Panc1 (cell line): ENCODE measurements at regions of chr20 and their contacts with region 1.

Region 1: GRCh38 chr20:8722276-8722928 is 346.5 kb upstream of the PLCB4 start:
- DNase-seq: peak; percentile 51
- ATAC-seq: peak; percentile 87
- H3K4me3 ChIP-seq: no peak overlapping the region
- H3K27ac ChIP-seq: no peak overlapping the region
- H3K4me1 ChIP-seq: no peaks in the 10 kb centered on the region
- H3K27me3 ChIP-seq: no peaks in the 10 kb centered on the region
- CTCF ChIP-seq: peak; percentile 84

Region 2: GRCh38 chr20:7935027-7935551 is 787.3 kb before region 1 on chr20:
- CTCF ChIA-PET with region 1: interaction called, 34 read pairs
- POLR2A ChIA-PET with region 1: no interaction called
- in situ Hi-C with region 1: no loop called
- intact Hi-C with region 1: loop called (anchors 2 kb)
- DNase-seq: no peak
- ATAC-seq: no peak
- H3K4me3 ChIP-seq: no peak overlapping the region
- H3K27ac ChIP-seq: no peak overlapping the region
- H3K4me1 ChIP-seq: no peaks in the 10 kb centered on the region
- H3K27me3 ChIP-seq: no peaks in the 10 kb centered on the region
- CTCF ChIP-seq: no peak

Region 3: GRCh38 chr20:8043687-8044282 is 678.6 kb before region 1 on chr20:
- CTCF ChIA-PET with region 1: interaction called, 16 read pairs
- POLR2A ChIA-PET with region 1: no interaction called
- in situ Hi-C with region 1: no loop called
- intact Hi-C with region 1: loop called (anchors 2 kb)
- DNase-seq: peak; percentile 42
- ATAC-seq: peak; percentile 81; the same call in 1 of the 2 replicates
- H3K4me3 ChIP-seq: no peak overlapping the region
- H3K27ac ChIP-seq: no peak overlapping the region
- H3K4me1 ChIP-seq: no peaks in the 10 kb centered on the region
- H3K27me3 ChIP-seq: no peaks in the 10 kb centered on the region; the same call in 1 of the 2 replicates
- CTCF ChIP-seq: peak; percentile 75; the same call in 1 of the 2 replicates

Region 4: GRCh38 chr20:8131598-8132483 is 590.6 kb before region 1 on chr20 and contains the start of gene PLCB1:
- CTCF ChIA-PET with region 1: no interaction called
- POLR2A ChIA-PET with region 1: no interaction called
- in situ Hi-C with region 1: no loop called
- intact Hi-C with region 1: loop called (anchors 1 kb)
- DNase-seq: peak; percentile 20
- ATAC-seq: peak; percentile 98
- H3K4me3 ChIP-seq: peak within 1 kb of the TSS; percentile 33 to 44; a peak in 3 of 4 replicates
- H3K27ac ChIP-seq: no peak within 1 kb of the TSS
- H3K4me1 ChIP-seq: peaks cover 3% of the 10 kb centered on the region; the same call in 1 of the 2 replicates
- H3K27me3 ChIP-seq: peaks cover 18% of the 10 kb centered on the region
- CTCF ChIP-seq: peak; percentile 91
- total RNA-seq, gene PLCB1: 0.59 TPM

Region 5: GRCh38 chr20:8389381-8390036 is 332.9 kb before region 1 on chr20:
- CTCF ChIA-PET with region 1: no interaction called
- POLR2A ChIA-PET with region 1: no interaction called
- in situ Hi-C with region 1: no loop called
- intact Hi-C with region 1: loop called (anchors 5 kb)
- DNase-seq: peak; percentile 1
- ATAC-seq: no peak
- H3K4me3 ChIP-seq: no peak overlapping the region
- H3K27ac ChIP-seq: no peak overlapping the region
- H3K4me1 ChIP-seq: no peaks in the 10 kb centered on the region
- H3K27me3 ChIP-seq: no peaks in the 10 kb centered on the region
- CTCF ChIP-seq: peak; percentile 58

Region 6: GRCh38 chr20:8983478-8984345 is 261.3 kb after region 1 on chr20:
- CTCF ChIA-PET with region 1: no interaction called
- POLR2A ChIA-PET with region 1: no interaction called
- in situ Hi-C with region 1: no loop called
- intact Hi-C with region 1: no loop called
- DNase-seq: no peak
- ATAC-seq: no peak
- H3K4me3 ChIP-seq: no peak overlapping the region
- H3K27ac ChIP-seq: no peak overlapping the region
- H3K4me1 ChIP-seq: no peaks in the 10 kb centered on the region
- H3K27me3 ChIP-seq: no peaks in the 10 kb centered on the region
- CTCF ChIP-seq: no peak